Endothelial cell of umbilical vein (primary cell): ENCODE measurements at regions of chr5 and their contacts with region 1.

Region 1: GRCh38 chr5:122142480-122143164 is 13.3 kb downstream of the ZNF474 start:
- DNase-seq: no peak
- H3K4me3 ChIP-seq: no peak overlapping the region
- H3K27ac ChIP-seq: no peak overlapping the region
- H3K4me1 ChIP-seq: no peaks in the 10 kb centered on the region
- H3K27me3 ChIP-seq: no peaks in the 10 kb centered on the region
- CTCF ChIP-seq: no peak
- POLR2A ChIP-seq: no peak

Region 2: GRCh38 chr5:121640298-121640697 is 502.3 kb before region 1 on chr5:
- CTCF ChIA-PET with region 1: no interaction called
- POLR2A ChIA-PET with region 1: no interaction called
- dilution Hi-C with region 1: no loop called
- intact Hi-C with region 1: no loop called
- DNase-seq: no peak
- H3K4me3 ChIP-seq: no peak overlapping the region
- H3K27ac ChIP-seq: no peak overlapping the region
- H3K4me1 ChIP-seq: no peaks in the 10 kb centered on the region
- H3K27me3 ChIP-seq: no peaks in the 10 kb centered on the region
- CTCF ChIP-seq: no peak
- POLR2A ChIP-seq: no peak

Region 3: GRCh38 chr5:122129306-122129705 is 13.3 kb before region 1 on chr5 and contains the start of gene ZNF474:
- CTCF ChIA-PET with region 1: interaction called, 6 read pairs
- POLR2A ChIA-PET with region 1: no interaction called
- dilution Hi-C with region 1: no loop called
- intact Hi-C with region 1: loop called (anchors 2 kb)
- DNase-seq: peak; percentile 91
- H3K4me3 ChIP-seq: no peak within 1 kb of the TSS
- H3K27ac ChIP-seq: no peak within 1 kb of the TSS
- H3K4me1 ChIP-seq: no peaks in the 10 kb centered on the region
- H3K27me3 ChIP-seq: no peaks in the 10 kb centered on the region
- CTCF ChIP-seq: no peak
- POLR2A ChIP-seq: no peak
- total RNA-seq, gene ZNF474: 0.16 TPM in 1 of 2 replicates, not detected in the other

Region 4: GRCh38 chr5:122156724-122157325 is 14.2 kb after region 1 on chr5:
- CTCF ChIA-PET with region 1: interaction called, 15 read pairs
- POLR2A ChIA-PET with region 1: no interaction called
- dilution Hi-C with region 1: no loop called
- intact Hi-C with region 1: no loop called
- DNase-seq: peak; percentile 42
- H3K4me3 ChIP-seq: no peak overlapping the region
- H3K27ac ChIP-seq: no peak overlapping the region
- H3K4me1 ChIP-seq: peaks cover 8% of the 10 kb centered on the region
- H3K27me3 ChIP-seq: no peaks in the 10 kb centered on the region
- CTCF ChIP-seq: peak in 1 of 2 donors; percentile 19
- POLR2A ChIP-seq: no peak